ENCODE measurements at regions of chr7 and their contacts with region 1.

Region 1: GRCh38 chr7:139016931-139017511 is 18.8 kb downstream of the ZC3HAV1L start:
- DNase-seq: peak; percentile 88
- H3K4me3 ChIP-seq: peak overlapping the region in 1 of 2 experiments; percentile 31; a peak in 1 of 4 replicates
- H3K27ac ChIP-seq: no peak overlapping the region
- H3K4me1 ChIP-seq: peaks cover 0 to 3% of the 10 kb centered on the region in 2 experiments; a peak in 2 of 4 replicates
- H3K27me3 ChIP-seq: 0 out of 2 replicates have a peak, but pooled peaks cover 4% of the 10 kb centered on the region
- CTCF ChIP-seq: peak; percentile 88
- EP300 ChIP-seq: no peak
- RAD21 ChIP-seq: peak; percentile 89

Region 2: DNA sequence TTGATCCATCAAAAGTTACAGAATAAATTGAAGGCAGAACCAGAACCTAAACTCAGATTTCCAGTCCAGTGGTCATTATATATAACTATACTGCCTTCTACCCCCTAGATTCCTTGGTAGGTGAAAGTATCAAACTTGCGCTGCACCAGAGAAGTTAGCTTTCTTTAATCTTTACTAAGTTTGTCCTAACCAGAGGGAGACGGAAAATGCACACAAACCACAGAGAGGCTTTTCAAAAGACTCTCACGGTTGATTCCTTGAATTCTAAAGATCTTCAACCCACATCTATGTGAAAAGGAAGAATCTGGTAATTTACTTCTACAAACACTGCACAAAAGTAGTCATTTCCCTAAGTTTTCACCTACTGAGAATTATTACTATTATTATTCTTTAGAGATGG is 17.6 kb before region 1 on chr7:
- CTCF ChIA-PET with region 1: interaction called, 22 read pairs
- POLR2A ChIA-PET with region 1: no interaction called
- DNase-seq: no peak
- H3K4me3 ChIP-seq: no peak overlapping the region
- H3K27ac ChIP-seq: no peak overlapping the region
- H3K4me1 ChIP-seq: no peaks in the 10 kb centered on the region
- H3K27me3 ChIP-seq: no peaks in the 10 kb centered on the region
- CTCF ChIP-seq: no peak
- EP300 ChIP-seq: no peak
- RAD21 ChIP-seq: no peak

Region 3: GRCh38 chr7:139035586-139036353 is 18.7 kb after region 1 on chr7 and contains the start of gene ZC3HAV1L:
- CTCF ChIA-PET with region 1: interaction called, 64 read pairs
- POLR2A ChIA-PET with region 1: interaction called, 5 read pairs
- DNase-seq: peak; percentile 99
- H3K4me3 ChIP-seq: peak within 1 kb of the TSS; percentile 69 to 86
- H3K27ac ChIP-seq: peak within 1 kb of the TSS; percentile 54 to 87
- H3K4me1 ChIP-seq: peaks cover 9 to 20% of the 10 kb centered on the region in 2 experiments; a peak in 3 of 4 replicates
- H3K27me3 ChIP-seq: no peaks in the 10 kb centered on the region
- CTCF ChIP-seq: no peak
- EP300 ChIP-seq: peak in 1 of 2 experiments; percentile 5; a peak in 1 of 4 replicates
- RAD21 ChIP-seq: no peak
- polyA plus RNA-seq, gene ZC3HAV1L: 9.7 and 14.5 TPM in 2 replicates

Region 4: DNA sequence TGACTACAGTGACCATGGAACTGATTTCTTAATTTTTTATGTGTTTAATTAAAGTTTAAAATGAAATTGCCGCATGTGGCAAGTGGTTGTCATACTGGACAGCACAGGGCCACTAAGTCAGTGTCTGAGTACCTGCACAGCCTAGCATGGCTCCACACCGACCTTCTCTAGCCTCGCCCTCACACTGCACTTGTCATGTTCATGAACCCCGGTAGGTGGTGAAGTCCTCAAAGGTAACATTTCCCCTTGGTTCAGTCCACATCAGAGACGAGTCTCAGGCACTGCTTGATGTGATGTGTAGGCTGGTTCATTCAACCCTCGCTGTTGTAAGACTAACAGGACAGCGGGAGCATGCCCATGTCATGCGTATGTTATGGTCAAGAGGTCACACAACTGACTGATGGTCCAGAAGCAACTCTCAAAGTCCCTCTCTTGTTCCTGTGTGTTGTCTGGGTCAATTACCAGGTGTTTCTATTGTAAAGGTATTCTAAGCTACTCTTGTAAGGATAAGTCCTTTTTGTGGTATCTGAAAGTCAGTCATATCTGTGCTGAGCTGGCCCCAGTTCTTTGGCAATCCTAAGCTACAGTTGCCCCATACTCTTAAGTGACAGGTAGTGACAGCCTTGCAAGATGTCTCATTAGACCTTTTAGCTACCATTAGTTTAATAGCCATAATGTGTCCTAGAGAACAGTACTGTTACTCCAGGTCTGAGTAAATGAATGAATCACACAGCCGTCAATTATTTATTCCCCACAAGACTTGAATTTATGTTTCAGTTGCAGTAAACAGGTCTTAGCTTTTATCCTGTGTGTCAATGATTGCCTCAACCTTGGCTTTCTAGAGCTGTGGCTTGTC is 51.8 kb after region 1 on chr7:
- CTCF ChIA-PET with region 1: interaction called, 28 read pairs
- POLR2A ChIA-PET with region 1: no interaction called
- DNase-seq: no peak
- H3K4me3 ChIP-seq: no peak overlapping the region
- H3K27ac ChIP-seq: no peak overlapping the region
- H3K4me1 ChIP-seq: no peaks in the 10 kb centered on the region
- H3K27me3 ChIP-seq: no peaks in the 10 kb centered on the region
- CTCF ChIP-seq: no peak
- EP300 ChIP-seq: no peak
- RAD21 ChIP-seq: no peak

Region 5: GRCh38 chr7:139714163-139714901 is 697.3 kb after region 1 on chr7:
- CTCF ChIA-PET with region 1: no interaction called
- POLR2A ChIA-PET with region 1: no interaction called
- DNase-seq: no peak
- H3K4me3 ChIP-seq: no peak overlapping the region
- H3K27ac ChIP-seq: no peak overlapping the region
- H3K4me1 ChIP-seq: peaks cover 6 to 9% of the 10 kb centered on the region in 2 experiments; a peak in 3 of 4 replicates
- H3K27me3 ChIP-seq: no peaks in the 10 kb centered on the region
- CTCF ChIP-seq: no peak
- EP300 ChIP-seq: no peak
- RAD21 ChIP-seq: no peak